ENCODE measurements at regions of chr17 and their contacts with region 1.

Region 1: DNA sequence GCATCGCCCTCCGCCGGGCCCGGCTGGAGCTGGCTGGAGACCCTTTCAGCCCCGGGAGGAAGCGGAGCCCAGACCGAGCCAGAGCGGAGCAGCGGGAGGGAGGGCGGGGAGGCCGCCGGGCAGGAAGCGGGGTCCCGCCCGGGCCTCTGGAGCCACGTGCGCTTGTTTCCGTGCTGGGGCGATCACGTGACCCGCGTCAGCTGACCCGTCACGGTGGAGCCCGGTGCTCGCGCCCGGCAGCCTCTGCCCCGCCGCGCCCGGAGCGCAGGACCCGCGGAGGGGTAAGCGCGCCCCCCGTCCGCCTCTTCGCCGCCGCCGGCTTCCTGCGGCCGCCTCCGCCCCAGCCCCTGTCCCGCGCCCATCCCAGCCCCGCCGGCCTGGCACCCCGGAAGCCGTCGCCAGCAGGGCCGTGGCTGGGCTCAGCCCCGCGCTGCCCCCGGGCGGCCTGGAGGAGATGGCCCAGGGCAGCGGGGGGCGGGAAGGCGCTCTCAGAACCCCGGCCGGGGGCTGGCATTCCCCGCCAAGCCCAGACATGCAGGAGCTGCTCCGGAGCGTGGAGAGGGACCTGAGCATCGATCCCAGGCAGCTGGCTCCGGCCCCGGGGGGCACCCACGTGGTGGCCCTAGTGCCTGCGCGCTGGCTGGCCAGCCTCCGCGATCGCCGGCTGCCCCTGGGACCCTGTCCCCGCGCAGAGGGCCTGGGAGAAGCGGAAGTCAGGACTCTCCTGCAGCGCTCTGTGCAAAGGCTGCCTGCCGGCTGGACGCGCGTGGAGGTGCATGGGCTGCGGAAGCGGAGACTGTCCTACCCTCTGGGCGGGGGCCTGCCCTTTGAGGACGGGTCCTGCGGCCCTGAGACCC is at the start of gene WDR81:
- DNase-seq: no peak
- ATAC-seq: peak; percentile 69
- H3K4me3 ChIP-seq: peak within 1 kb of the TSS; percentile 86
- H3K27ac ChIP-seq: peak within 1 kb of the TSS; percentile 95
- H3K4me1 ChIP-seq: peaks cover 28% of the 10 kb centered on the region
- H3K27me3 ChIP-seq: no peaks in the 10 kb centered on the region
- CTCF ChIP-seq: no peak
- EP300 ChIP-seq: no peak
- POLR2A ChIP-seq: peak; percentile 65
- RAD21 ChIP-seq: no peak
- polyA plus RNA-seq, gene WDR81: 0.13 TPM in 1 of 2 experiments, not detected in the other

Region 2: DNA sequence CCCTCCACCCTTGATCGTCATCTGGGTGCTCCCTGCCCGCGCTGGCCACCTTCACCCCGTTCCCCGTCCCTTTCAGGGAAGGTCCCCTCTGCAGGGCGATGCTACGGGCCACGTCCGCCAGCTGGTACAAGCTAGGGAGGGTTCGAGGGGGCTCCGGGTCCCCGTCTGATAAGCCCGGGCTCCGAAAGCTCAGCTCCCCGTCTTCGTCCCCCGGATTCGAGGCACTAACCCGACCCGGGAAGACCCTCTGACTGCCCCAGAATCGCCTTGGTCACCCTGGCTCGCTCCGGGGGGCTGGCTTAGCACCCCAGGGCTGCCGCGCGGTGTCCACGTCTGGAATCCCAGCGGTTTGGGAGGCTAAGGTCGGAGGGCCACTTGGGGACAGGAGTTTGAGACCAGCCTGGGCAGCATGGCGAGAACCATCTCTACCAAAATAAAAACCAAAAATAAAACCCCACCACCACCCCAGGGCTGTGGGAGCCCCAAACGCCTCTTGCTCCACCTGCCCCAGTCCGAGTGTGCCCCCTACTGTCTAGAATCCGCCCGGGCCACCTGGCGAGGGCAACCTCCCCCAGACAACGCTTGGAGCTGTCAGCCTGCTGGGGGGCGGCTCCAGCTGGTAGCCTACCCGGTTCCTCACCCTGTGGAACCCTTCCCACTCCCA is 95.0 kb before region 1 on chr17:
- CTCF ChIA-PET with region 1: no interaction called
- POLR2A ChIA-PET with region 1: no interaction called
- RAD21 ChIA-PET with region 1: no interaction called
- SMC1A ChIA-PET with region 1: no interaction called
- in situ Hi-C with region 1: no loop called
- intact Hi-C with region 1: no loop called
- DNase-seq: no peak
- ATAC-seq: peak; percentile 53
- H3K4me3 ChIP-seq: peak overlapping the region; percentile 88
- H3K27ac ChIP-seq: peak overlapping the region; percentile 87; the same call in 1 of the 2 replicates
- H3K4me1 ChIP-seq: peaks cover 42% of the 10 kb centered on the region
- H3K27me3 ChIP-seq: no peaks in the 10 kb centered on the region
- CTCF ChIP-seq: peak; percentile 83 to 91 (median 89)
- EP300 ChIP-seq: no peak
- POLR2A ChIP-seq: no peak; the same call in 1 of the 2 replicates
- RAD21 ChIP-seq: peak; percentile 92

Region 3: DNA sequence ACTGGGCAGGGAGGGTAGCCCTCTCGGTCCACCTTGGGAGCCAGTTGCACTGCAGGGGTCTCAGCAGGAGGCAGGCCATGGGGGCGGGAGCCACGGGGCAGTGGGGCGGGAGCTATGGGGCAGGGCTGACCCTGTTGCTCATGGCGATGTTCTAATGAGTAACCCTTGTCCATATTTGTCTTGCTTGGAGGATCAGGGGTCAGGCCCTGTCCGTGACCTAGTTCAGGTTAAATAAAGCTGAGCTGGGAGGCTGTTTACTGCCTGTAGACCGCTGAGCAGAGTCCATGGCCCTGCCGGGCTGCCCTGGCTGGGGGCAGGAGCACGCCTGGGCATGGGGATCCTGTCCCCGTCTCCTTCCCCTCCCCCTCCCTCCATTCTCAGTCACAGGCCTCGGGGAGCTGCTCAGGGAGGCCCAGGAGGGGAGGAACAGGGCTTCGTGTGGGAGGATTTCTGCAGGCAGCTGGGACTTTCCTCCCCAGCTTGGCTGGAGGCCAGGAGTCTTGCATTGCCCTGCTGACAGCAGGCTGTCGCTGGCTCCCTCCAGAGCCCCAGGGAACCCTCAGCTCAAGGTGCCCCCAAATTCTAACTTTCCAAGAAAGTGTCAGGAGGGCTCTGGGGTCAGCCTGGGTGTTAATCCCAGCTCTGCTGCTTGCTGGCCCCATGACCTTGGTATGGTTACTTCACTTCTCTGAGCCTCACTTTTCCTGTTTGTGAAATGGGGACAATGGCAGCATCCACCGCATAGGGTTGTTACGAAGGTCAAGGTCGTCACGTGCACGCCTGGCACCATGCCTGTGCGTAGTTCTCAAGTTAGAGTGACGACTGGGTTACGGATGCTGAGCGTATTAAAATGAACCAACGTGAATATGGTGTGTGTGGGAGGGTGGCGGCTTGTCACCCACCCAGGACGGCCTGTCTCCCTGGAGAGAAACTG is 11.9 kb after region 1 on chr17:
- CTCF ChIA-PET with region 1: interaction called, 13 read pairs
- POLR2A ChIA-PET with region 1: interaction called, 16 read pairs
- RAD21 ChIA-PET with region 1: interaction called, 24 read pairs
- SMC1A ChIA-PET with region 1: interaction called, 15 read pairs
- in situ Hi-C with region 1: no loop called
- intact Hi-C with region 1: no loop called
- DNase-seq: no peak
- ATAC-seq: peak; percentile 92
- H3K4me3 ChIP-seq: peak overlapping the region; percentile 26; the same call in 1 of the 2 replicates
- H3K27ac ChIP-seq: peak overlapping the region; percentile 74
- H3K4me1 ChIP-seq: peaks cover 22% of the 10 kb centered on the region
- H3K27me3 ChIP-seq: no peaks in the 10 kb centered on the region
- CTCF ChIP-seq: no peak; a peak in 1 of 6 replicates
- EP300 ChIP-seq: no peak; a peak in 1 of 4 replicates
- POLR2A ChIP-seq: peak; percentile 10; the same call in 1 of the 2 replicates
- RAD21 ChIP-seq: 0 out of 2 replicates have a peak, but pooled peaks have one; percentile 11

Region 4: GRCh38 chr17:1783834-1784611 is 59.3 kb after region 1 on chr17:
- CTCF ChIA-PET with region 1: interaction called, 121 read pairs
- POLR2A ChIA-PET with region 1: interaction called, 4 read pairs
- RAD21 ChIA-PET with region 1: interaction called, 80 read pairs
- SMC1A ChIA-PET with region 1: interaction called, 88 read pairs
- in situ Hi-C with region 1: no loop called
- intact Hi-C with region 1: loop called (anchors 1 kb)
- DNase-seq: no peak
- ATAC-seq: peak; percentile 77
- H3K4me3 ChIP-seq: no peak overlapping the region
- H3K27ac ChIP-seq: no peak overlapping the region
- H3K4me1 ChIP-seq: no peaks in the 10 kb centered on the region
- H3K27me3 ChIP-seq: no peaks in the 10 kb centered on the region
- CTCF ChIP-seq: peak; percentile 39 to 63 (median 50); a peak in 4 of 6 replicates
- EP300 ChIP-seq: no peak
- POLR2A ChIP-seq: no peak
- RAD21 ChIP-seq: peak; percentile 69

Region 5: DNA sequence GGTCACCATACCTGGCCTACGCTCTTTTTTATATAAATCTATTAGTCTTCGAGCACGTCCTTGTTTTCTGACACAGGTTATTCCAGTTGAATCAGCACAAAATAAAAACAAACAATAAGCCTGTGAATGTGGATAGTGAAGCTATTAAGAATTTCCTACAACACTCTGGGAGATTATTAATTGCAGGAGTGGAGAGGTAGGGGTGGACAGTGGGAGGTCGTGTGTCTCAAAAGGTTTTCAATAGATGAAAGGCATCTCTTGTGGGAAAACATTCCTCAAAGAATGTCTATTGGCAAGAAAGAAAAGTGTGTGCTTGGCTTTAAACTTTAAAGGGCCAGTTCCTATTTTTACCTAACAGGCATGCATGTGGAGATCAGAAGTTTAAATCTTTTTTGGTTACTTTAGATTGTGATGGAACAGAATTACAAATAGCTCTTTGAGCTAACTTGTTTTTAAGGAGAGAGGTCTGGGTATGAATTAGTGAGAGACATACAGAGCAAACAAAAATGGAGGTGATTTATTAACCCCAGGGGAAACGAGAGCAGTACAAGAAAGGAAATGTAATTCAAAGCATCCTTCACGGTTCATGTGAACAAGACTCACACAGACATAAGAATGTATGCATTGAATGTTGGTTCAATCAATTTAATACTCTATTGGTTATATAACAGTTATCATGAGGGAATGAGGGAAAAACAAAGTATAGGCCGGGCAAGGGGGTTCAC is 96.0 kb after region 1 on chr17:
- CTCF ChIA-PET with region 1: interaction called, 9 read pairs
- POLR2A ChIA-PET with region 1: interaction called, 5 read pairs
- RAD21 ChIA-PET with region 1: no interaction called
- SMC1A ChIA-PET with region 1: interaction called, 12 read pairs
- in situ Hi-C with region 1: no loop called
- intact Hi-C with region 1: no loop called
- DNase-seq: peak; percentile 36
- ATAC-seq: peak; percentile 79
- H3K4me3 ChIP-seq: no peak overlapping the region
- H3K27ac ChIP-seq: peak overlapping the region; percentile 61
- H3K4me1 ChIP-seq: peaks cover 16% of the 10 kb centered on the region
- H3K27me3 ChIP-seq: no peaks in the 10 kb centered on the region
- CTCF ChIP-seq: no peak
- EP300 ChIP-seq: no peak
- POLR2A ChIP-seq: no peak
- RAD21 ChIP-seq: no peak

Region 6: DNA sequence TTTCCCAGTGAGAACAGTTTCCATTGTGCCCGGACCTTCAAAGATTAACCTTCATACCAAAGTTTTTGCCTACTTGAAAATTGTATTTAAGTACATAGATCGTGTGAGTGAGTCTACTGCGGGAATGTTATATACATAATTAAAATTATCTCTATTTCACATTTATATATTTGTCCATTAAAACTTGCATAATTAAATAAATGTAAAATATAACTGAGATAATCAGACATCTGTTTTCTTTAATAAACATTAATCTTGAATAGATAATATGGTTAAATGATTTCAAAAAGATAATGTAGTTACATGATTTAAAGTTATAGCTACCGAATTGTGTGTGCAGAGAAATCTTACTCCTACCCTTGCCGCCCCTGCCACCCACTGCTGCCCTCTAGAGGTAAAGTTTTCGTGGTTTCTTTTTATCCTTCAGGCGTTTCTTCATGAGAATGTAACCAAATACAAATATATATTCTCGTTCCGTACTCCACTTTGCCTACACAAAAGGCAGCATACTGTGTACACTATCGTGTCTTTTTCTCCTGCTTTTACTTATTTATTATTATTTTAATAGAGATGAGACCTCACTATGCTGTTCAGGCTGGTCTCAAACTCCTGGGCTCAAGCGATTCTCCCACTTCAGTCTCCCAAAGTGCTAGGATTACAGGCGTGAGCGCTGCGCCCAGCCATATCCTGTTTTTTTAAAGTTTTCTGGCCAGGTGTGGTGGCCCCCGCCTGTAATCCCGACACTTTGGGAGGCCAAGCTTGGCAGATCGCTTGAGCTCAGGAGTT is 140.7 kb after region 1 on chr17:
- CTCF ChIA-PET with region 1: interaction called, 232 read pairs
- POLR2A ChIA-PET with region 1: interaction called, 7 read pairs
- RAD21 ChIA-PET with region 1: interaction called, 35 read pairs
- SMC1A ChIA-PET with region 1: interaction called, 56 read pairs
- in situ Hi-C with region 1: no loop called
- intact Hi-C with region 1: loop called (anchors 2 kb)
- DNase-seq: no peak
- ATAC-seq: peak; percentile 79
- H3K4me3 ChIP-seq: no peak overlapping the region
- H3K27ac ChIP-seq: no peak overlapping the region
- H3K4me1 ChIP-seq: no peaks in the 10 kb centered on the region
- H3K27me3 ChIP-seq: no peaks in the 10 kb centered on the region
- CTCF ChIP-seq: peak; percentile 54 to 70 (median 59)
- EP300 ChIP-seq: no peak
- POLR2A ChIP-seq: no peak
- RAD21 ChIP-seq: peak; percentile 65

Region 7: DNA sequence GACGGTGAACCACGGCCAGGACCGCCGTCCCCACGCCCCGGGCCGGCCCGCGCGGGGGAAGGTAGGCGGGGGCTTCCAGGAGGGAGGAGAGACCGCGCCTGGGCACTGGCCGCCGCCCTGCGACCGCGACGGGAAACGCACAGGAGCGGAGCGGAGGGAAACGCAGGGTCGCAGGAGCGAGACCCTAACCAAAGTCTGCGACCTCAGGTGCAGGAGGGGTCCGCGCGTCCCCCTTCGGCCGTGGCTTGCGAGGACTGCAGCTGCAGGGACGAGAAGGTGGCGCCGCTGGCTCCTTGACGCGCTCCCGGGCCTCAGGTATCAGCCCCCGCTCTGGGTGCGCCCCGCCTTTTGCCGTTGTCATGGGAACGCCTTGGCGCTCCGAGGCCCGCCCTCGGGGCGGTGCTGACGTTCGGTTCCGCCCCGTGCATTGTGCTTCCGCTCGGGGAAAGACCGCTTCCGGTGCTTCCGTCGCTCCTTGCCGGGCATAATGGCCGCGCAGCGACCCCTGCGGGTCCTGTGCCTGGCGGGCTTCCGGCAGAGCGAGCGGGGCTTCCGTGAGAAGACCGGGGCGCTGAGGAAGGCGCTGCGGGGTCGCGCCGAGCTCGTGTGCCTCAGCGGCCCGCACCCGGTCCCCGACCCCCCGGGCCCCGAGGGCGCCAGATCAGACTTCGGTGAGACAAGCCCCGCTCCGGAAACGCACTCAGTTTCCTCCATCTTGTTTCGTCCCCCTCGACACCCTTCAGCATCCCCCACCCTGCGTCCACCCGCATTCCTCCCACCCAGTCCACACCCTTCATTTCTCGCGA is 317.0 kb after region 1 on chr17 and contains the start of gene OVCA2:
- CTCF ChIA-PET with region 1: interaction called, 5 read pairs
- POLR2A ChIA-PET with region 1: no interaction called
- RAD21 ChIA-PET with region 1: no interaction called
- SMC1A ChIA-PET with region 1: no interaction called
- in situ Hi-C with region 1: no loop called
- intact Hi-C with region 1: loop called (anchors 5 kb)
- DNase-seq: peak; percentile 77
- ATAC-seq: peak; percentile 97
- H3K4me3 ChIP-seq: peak within 1 kb of the TSS; percentile 93
- H3K27ac ChIP-seq: peak within 1 kb of the TSS; percentile 82
- H3K4me1 ChIP-seq: peaks cover 16% of the 10 kb centered on the region
- H3K27me3 ChIP-seq: no peaks in the 10 kb centered on the region
- CTCF ChIP-seq: peak; percentile 38 to 79 (median 52); a peak in 4 of 6 replicates
- EP300 ChIP-seq: no peak
- POLR2A ChIP-seq: peak; percentile 90
- RAD21 ChIP-seq: peak; percentile 42; the same call in 1 of the 2 replicates
- polyA plus RNA-seq, gene OVCA2: 6.1 to 14.2 TPM

Region 8: DNA sequence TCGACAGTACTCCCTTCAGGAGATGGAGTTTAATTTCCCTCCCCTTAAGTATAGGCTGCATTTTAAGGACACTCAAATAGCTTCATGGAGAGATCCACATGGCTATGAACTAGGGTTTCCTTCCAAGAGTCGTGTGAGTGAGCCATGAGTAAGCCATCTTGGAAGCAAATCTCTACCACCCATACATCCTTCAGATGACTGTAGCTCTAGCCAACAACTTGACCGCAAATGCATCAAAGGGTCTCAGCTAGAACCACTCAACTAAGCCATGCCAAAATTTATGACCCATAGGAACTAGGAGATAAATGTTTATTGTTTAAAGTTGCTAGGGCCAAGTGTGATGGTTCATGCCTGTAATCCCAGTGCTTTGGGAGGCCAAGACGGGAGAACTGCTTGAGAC is 743.5 kb after region 1 on chr17:
- CTCF ChIA-PET with region 1: no interaction called
- POLR2A ChIA-PET with region 1: no interaction called
- RAD21 ChIA-PET with region 1: no interaction called
- SMC1A ChIA-PET with region 1: no interaction called
- in situ Hi-C with region 1: no loop called
- intact Hi-C with region 1: no loop called
- DNase-seq: no peak
- ATAC-seq: no peak
- H3K4me3 ChIP-seq: no peak overlapping the region
- H3K27ac ChIP-seq: no peak overlapping the region
- H3K4me1 ChIP-seq: no peaks in the 10 kb centered on the region
- H3K27me3 ChIP-seq: no peaks in the 10 kb centered on the region
- CTCF ChIP-seq: no peak
- EP300 ChIP-seq: no peak
- POLR2A ChIP-seq: no peak
- RAD21 ChIP-seq: no peak